ENCODE measurements at regions of chr1 and their contacts with region 1.

Region 1: GRCh38 chr1:206612129-206612876 is at the start of gene EIF2D:
- DNase-seq: peak; percentile 86 to 98
- H3K4me3 ChIP-seq: peak within 1 kb of the TSS; percentile 83 to 91 (median 84)
- H3K27ac ChIP-seq: peak within 1 kb of the TSS; percentile 89
- H3K4me1 ChIP-seq: peaks cover 0 to 6% (median 4%) of the 10 kb centered on the region in 4 experiments; a peak in 5 of 7 replicates
- H3K27me3 ChIP-seq: no peaks in the 10 kb centered on the region; a peak in 1 of 7 replicates
- CTCF ChIP-seq: peak; percentile 90 to 99 (median 92)
- EP300 ChIP-seq: peak in 1 of 2 experiments; percentile 88; a peak in 1 of 3 replicates
- POLR2A ChIP-seq: peak; percentile 92 to 97
- RAD21 ChIP-seq: peak; percentile 35 to 39; a peak in 2 of 4 replicates
- total RNA-seq, gene EIF2D: 33.1 and 36.1 TPM in 2 replicates

Region 2: DNA sequence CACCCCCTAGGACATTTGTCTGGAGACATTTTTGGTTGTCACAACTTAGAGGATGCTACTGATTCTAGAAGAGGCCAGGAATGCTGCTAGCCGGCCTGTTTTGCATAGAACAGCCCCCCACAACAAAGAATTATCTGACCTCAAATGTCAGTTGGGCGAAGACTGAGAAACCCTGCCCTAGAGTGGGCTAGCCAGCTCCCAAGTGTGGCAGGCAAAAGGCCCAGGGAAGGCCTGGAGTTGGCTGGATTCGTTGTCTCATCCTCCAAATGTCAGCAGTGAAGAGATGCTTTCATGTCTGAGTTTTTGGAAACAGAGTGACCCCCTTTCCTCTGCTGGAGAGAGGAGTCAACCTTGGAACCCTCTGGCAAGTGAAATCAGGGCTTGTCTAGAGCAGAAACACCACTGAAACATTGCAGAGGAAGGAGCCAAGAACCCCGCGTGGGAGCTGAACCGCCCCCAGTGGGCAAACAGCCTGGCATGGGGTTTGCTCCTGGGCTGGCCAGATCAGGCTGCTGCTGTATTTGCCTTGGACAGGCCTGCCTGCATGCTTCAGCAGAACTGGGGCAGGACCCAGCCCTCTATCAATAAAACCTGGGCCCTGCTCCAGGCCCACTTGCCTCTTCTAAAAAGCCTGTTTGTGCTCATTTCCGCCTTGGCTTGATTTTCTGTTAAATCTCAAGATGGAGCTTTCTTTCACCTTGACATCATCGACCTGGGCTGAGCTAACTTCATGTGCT is 72.1 kb before region 1 on chr1:
- CTCF ChIA-PET with region 1: no interaction called
- POLR2A ChIA-PET with region 1: no interaction called
- DNase-seq: no peak
- H3K4me3 ChIP-seq: no peak overlapping the region
- H3K27ac ChIP-seq: no peak overlapping the region
- H3K4me1 ChIP-seq: peaks cover 0 to 2% (median under 1%) of the 10 kb centered on the region in 4 experiments; a peak in 3 of 7 replicates
- H3K27me3 ChIP-seq: no peaks in the 10 kb centered on the region
- CTCF ChIP-seq: no peak
- EP300 ChIP-seq: no peak
- POLR2A ChIP-seq: no peak
- RAD21 ChIP-seq: no peak

Region 3: DNA sequence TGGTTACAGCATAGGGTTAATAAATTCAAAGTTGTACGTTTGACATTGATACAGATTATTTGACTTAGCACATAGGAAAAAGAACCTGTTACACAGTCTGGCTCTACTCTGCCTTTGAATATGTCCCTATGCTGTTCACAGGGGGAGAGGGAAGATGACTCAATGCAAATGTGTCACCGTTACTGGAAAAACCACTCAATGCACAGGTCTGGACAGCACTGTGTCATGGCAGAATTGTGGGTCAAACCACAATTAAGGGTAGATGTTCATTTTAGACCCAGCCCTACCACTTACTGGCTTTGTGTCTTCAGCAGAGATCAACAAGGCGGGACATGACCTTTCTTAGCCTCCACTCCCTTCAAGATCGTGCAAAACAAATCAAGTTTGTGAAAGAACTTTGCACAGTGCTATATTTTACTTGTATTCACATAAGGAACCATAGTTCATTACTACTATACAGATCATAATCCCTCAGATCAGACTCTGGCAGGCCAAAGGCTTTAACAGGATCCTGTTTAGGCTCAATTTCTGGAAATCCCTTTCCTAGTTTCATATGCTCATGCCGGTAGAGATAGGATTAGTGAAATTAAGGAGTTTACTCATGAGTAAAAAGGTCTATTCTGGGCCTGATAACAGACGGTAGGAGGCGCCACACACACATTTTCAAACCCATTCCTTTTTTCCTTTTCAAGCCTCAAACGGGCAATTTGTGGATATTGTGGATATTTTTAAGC is 22.1 kb before region 1 on chr1:
- CTCF ChIA-PET with region 1: interaction called, 15 read pairs
- POLR2A ChIA-PET with region 1: interaction called, 3 read pairs
- DNase-seq: no peak
- H3K4me3 ChIP-seq: no peak overlapping the region
- H3K27ac ChIP-seq: no peak overlapping the region
- H3K4me1 ChIP-seq: no peaks in the 10 kb centered on the region
- H3K27me3 ChIP-seq: no peaks in the 10 kb centered on the region
- CTCF ChIP-seq: peak in 2 of 3 experiments; percentile 49 to 69; a peak in 3 of 4 replicates
- EP300 ChIP-seq: no peak
- POLR2A ChIP-seq: no peak
- RAD21 ChIP-seq: peak; percentile 40 to 54; a peak in 3 of 4 replicates

Region 4: GRCh38 chr1:206600527-206600926 is 11.8 kb before region 1 on chr1:
- CTCF ChIA-PET with region 1: interaction called, 30 read pairs
- POLR2A ChIA-PET with region 1: interaction called, 12 read pairs
- DNase-seq: no peak
- H3K4me3 ChIP-seq: no peak overlapping the region
- H3K27ac ChIP-seq: no peak overlapping the region
- H3K4me1 ChIP-seq: no peaks in the 10 kb centered on the region
- H3K27me3 ChIP-seq: no peaks in the 10 kb centered on the region
- CTCF ChIP-seq: no peak
- EP300 ChIP-seq: no peak
- POLR2A ChIP-seq: no peak
- RAD21 ChIP-seq: no peak

Region 5: DNA sequence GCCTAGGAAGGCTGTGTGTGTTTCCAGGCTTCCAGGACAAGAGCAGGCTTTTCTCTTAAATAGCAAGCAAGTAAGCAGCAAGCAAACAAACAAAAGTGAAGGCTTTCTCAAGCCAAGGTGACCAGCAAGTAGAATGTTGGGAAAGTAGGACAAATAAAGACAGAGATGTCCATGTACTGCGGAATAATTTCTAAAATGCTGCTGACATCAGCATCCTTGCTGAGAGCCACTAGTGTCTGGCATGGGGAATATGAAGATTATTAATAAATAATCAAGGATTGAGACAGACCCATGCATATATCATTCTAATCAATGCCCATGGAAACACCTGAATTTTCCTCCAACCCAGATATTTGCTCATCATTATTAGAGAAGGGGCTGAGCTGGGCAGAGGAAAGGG is 16.6 kb after region 1 on chr1:
- CTCF ChIA-PET with region 1: interaction called, 39 read pairs
- POLR2A ChIA-PET with region 1: interaction called, 5 read pairs
- DNase-seq: no peak
- H3K4me3 ChIP-seq: no peak overlapping the region
- H3K27ac ChIP-seq: no peak overlapping the region
- H3K4me1 ChIP-seq: peaks cover 0 to 6% (median 0%) of the 10 kb centered on the region in 4 experiments; a peak in 2 of 7 replicates
- H3K27me3 ChIP-seq: no peaks in the 10 kb centered on the region
- CTCF ChIP-seq: no peak
- EP300 ChIP-seq: no peak
- POLR2A ChIP-seq: no peak
- RAD21 ChIP-seq: no peak

Region 6: GRCh38 chr1:206635080-206635977 is 23.0 kb after region 1 on chr1 and contains the start of gene DYRK3:
- CTCF ChIA-PET with region 1: interaction called, 39 read pairs
- POLR2A ChIA-PET with region 1: interaction called, 4 read pairs
- DNase-seq: peak; percentile 63 to 97
- H3K4me3 ChIP-seq: peak within 1 kb of the TSS; percentile 66 to 88 (median 79)
- H3K27ac ChIP-seq: no peak within 1 kb of the TSS
- H3K4me1 ChIP-seq: peaks cover 0 to 10% (median 4%) of the 10 kb centered on the region in 4 experiments; a peak in 4 of 7 replicates
- H3K27me3 ChIP-seq: peaks cover 0 to 4% (median 0%) of the 10 kb centered on the region in 4 experiments; a peak in 2 of 7 replicates
- CTCF ChIP-seq: no peak
- EP300 ChIP-seq: no peak
- POLR2A ChIP-seq: peak in 1 of 2 experiments; percentile 68; a peak in 1 of 3 replicates
- RAD21 ChIP-seq: no peak
- total RNA-seq, gene DYRK3: 7.7 and 8.5 TPM in 2 replicates

Region 7: GRCh38 chr1:206651958-206652890 is 39.9 kb after region 1 on chr1:
- CTCF ChIA-PET with region 1: interaction called, 10 read pairs
- POLR2A ChIA-PET with region 1: interaction called, 3 read pairs
- DNase-seq: no peak
- H3K4me3 ChIP-seq: no peak overlapping the region
- H3K27ac ChIP-seq: no peak overlapping the region
- H3K4me1 ChIP-seq: no peaks in the 10 kb centered on the region
- H3K27me3 ChIP-seq: peaks cover 0 to 5% (median 4%) of the 10 kb centered on the region in 4 experiments; a peak in 4 of 7 replicates
- CTCF ChIP-seq: no peak
- EP300 ChIP-seq: no peak
- POLR2A ChIP-seq: no peak
- RAD21 ChIP-seq: no peak

Region 8: GRCh38 chr1:206658264-206658980 is 46.1 kb after region 1 on chr1:
- CTCF ChIA-PET with region 1: interaction called, 140 read pairs
- POLR2A ChIA-PET with region 1: interaction called, 5 read pairs
- DNase-seq: peak in 1 of 2 experiments; percentile 93
- H3K4me3 ChIP-seq: peak overlapping the region in 1 of 4 experiments; percentile 51; a peak in 2 of 8 replicates
- H3K27ac ChIP-seq: no peak overlapping the region
- H3K4me1 ChIP-seq: peaks cover 0 to 12% (median 5%) of the 10 kb centered on the region in 4 experiments; a peak in 6 of 7 replicates
- H3K27me3 ChIP-seq: peaks cover 0 to 17% (median 10%) of the 10 kb centered on the region in 4 experiments; a peak in 6 of 7 replicates
- CTCF ChIP-seq: peak; percentile 83 to 86 (median 84)
- EP300 ChIP-seq: no peak
- POLR2A ChIP-seq: no peak
- RAD21 ChIP-seq: peak; percentile 56 to 63